Left cardiac atrium (tissue), 4 donors: ENCODE measurements at regions of chr13 and their contacts with region 1.

Region 1: DNA sequence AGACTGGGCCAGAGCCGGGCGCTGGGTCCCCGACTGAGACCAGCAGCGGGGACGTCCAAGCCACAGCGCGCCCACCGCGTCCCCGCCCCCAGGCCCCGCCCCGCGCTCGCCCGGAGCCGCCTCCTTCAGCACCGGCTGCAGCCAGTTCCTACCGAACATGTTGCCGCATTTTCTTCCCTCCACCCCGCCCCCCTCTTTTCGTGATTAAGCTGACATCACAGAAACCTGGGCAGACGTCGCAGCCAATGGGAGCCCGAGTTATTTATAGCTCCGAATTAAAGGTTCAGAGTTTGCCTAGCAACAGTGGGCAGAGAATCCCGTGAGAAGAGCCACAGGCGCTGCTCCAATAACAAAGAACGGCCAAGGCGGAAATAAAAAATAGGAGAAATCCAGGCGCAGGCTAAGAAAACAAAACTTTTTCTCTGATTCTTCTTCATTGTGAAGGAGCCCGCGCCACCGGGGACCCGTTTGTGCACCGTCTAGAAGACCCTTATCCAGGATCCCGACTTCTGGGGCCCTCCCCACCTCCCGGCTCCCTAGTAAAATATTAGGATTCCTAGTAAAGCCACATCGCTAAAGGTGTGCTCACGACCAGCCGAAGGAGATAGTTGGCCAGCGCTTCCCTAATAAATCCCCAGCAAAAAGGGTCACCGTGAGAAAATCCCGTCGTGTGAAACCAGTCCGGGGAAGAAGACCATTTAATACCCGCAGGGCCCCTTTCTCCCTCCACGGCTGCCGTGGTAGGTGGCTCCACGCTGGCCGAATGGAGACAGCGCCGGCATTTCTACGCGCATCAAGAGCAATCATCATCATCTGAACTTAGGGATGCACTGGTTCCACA is 61.7 kb downstream of the SERP2 start:
- DNase-seq: peak; percentile 94
- ATAC-seq: peak; percentile 83 to 85

Region 2: GRCh38 chr13:43905435-43906031 is 529.8 kb before region 1 on chr13:
- intact Hi-C with region 1: loop called (anchors 2 to 5 kb)
- DNase-seq: no peak
- ATAC-seq: peak; percentile 53 to 70

Region 3: DNA sequence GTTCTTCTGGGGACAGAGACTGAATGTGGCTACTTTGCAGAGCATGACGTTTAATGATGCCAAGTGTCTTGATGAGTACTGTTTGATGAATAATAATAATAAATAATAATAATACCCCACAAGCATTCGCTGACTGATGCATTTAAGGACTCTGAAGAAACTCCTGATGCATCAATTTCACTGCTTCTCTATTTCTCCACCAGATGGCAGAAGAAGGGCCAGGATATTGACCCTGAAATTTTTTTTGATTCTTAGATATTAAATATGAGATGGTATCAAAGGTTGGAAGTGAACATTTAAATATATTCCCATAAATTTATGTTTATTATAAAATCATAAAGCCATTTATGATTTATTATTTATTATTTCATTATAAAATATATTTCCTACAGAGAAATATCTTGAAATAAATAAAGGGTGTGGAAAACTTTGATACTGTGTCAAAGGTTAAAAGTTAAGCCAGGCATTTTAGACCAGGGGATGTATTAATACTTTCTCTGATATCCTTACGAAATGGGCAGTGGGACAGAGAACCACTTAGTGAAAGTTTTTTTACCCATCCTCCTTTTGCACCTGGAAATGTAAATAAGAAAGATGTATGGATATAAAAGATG is 384.8 kb before region 1 on chr13:
- intact Hi-C with region 1: loop called (anchors 1 to 10 kb)
- DNase-seq: no peak
- ATAC-seq: no peak

Region 4: GRCh38 chr13:44237276-44237767 is 198.0 kb before region 1 on chr13:
- intact Hi-C with region 1: loop called in 1 of 2 experiments (anchors 5 kb)
- DNase-seq: peak; percentile 76
- ATAC-seq: peak; percentile 98 to 99

Region 5: GRCh38 chr13:44312898-44313551 is 122.3 kb before region 1 on chr13:
- intact Hi-C with region 1: loop called (anchors 5 to 10 kb)
- DNase-seq: no peak
- ATAC-seq: peak in 1 of 2 donors; percentile 31

Region 6: DNA sequence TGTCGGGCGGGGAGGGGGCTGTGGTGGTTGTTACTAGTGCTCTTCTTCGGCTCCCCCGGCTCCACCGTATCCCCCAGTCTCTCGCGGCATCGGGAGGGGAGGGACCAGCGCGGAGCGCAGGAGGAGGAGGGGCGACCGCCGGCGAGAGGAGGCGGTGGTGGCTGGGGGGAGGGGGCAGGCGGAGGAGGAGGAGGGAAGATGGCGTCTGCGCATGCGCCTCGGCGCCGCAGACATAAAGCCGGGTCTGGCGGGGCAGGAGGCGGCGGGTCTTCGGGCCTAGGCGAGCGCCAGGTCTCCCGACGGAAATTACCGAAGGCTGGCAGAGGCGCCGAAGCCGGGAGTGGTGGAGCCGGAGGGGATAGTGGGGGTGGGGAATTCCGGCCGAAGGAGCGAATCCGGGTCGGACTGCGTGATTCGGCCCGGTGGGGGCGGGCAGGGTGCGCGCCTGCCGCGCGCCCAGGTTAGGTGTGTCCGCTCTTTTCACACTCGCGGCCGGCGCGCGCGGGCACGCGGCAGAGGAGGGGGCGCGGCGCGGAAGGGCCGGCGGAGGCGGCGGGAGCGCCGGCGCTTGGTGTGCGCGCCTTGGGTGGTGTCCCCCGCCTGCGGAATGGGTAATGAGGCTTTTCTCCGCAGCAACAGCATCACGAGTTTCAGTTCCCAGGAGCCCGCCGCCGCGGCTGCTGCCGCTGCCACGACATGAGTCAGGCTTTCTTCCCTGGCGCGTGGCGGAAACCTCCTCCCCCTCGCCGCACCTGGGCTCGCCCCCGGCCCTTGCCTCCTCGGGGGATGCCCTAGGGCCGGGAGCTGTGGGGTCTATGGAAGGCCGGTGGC is 142.1 kb after region 1 on chr13:
- intact Hi-C with region 1: no loop called
- DNase-seq: peak; percentile 98
- ATAC-seq: peak; percentile 90 to 92

Region 7: GRCh38 chr13:46126552-46127357 is 1691.4 kb after region 1 on chr13:
- intact Hi-C with region 1: no loop called
- DNase-seq: peak; percentile 48
- ATAC-seq: peak; percentile 88 to 89